Activated CD4-positive, alpha-beta memory T cell treated with anti-CD3 and anti-CD28 coated beads for 36 hours (primary cell): ENCODE measurements at regions of chr17 and their contacts with region 1.

Region 1: DNA sequence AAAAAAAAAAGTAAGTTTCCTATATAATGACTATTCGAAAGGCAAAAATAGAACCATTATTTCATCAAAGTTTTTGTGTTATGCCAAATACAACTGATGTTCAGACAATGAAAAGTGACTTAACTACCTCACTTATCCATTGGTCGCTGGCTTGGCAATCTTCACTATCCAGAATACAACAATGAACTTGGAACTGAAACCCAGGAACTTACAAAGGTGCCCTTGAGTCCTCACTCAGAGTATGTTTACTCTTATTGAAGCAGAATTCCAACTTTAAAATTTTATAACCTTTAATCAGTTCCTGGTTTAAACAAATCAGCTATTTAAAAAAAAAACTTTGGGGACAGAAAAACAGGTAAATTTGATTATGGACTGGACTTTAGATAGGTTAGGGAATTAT is 34.1 kb downstream of the HELZ start:
- DNase-seq: no peak
- H3K4me3 Mint-ChIP-seq: no peak overlapping the region
- H3K27ac Mint-ChIP-seq: no peak overlapping the region
- H3K4me1 Mint-ChIP-seq: peaks cover 12% of the 10 kb centered on the region
- H3K27me3 Mint-ChIP-seq: no peaks in the 10 kb centered on the region

Region 2: GRCh38 chr17:67200720-67201301 is 10.1 kb before region 1 on chr17:
- CTCF ChIA-PET with region 1: interaction called, 10 read pairs
- POLR2A ChIA-PET with region 1: no interaction called
- intact Hi-C with region 1: no loop called
- DNase-seq: no peak
- H3K4me3 Mint-ChIP-seq: no peak overlapping the region
- H3K27ac Mint-ChIP-seq: no peak overlapping the region
- H3K4me1 Mint-ChIP-seq: peaks cover 22% of the 10 kb centered on the region
- H3K27me3 Mint-ChIP-seq: no peaks in the 10 kb centered on the region